Heart right ventricle (tissue), 16 donors: ENCODE measurements at regions of chr2 and their contacts with region 1.

Region 1: GRCh38 chr2:190459881-190460280 is 51.7 kb downstream of the MFSD6 start:
- DNase-seq: no peak
- ATAC-seq: peak in 7 of 8 donors; percentile 49 to 89 (median 75)
- H3K4me3 ChIP-seq: no peak overlapping the region
- H3K27ac ChIP-seq: peak overlapping the region in 1 of 10 donors; percentile 40
- H3K4me1 ChIP-seq: peaks cover 0 to 21% (median 14%) of the 10 kb centered on the region in 9 donors
- H3K27me3 ChIP-seq: no peaks in the 10 kb centered on the region
- CTCF ChIP-seq: no peak

Region 2: DNA sequence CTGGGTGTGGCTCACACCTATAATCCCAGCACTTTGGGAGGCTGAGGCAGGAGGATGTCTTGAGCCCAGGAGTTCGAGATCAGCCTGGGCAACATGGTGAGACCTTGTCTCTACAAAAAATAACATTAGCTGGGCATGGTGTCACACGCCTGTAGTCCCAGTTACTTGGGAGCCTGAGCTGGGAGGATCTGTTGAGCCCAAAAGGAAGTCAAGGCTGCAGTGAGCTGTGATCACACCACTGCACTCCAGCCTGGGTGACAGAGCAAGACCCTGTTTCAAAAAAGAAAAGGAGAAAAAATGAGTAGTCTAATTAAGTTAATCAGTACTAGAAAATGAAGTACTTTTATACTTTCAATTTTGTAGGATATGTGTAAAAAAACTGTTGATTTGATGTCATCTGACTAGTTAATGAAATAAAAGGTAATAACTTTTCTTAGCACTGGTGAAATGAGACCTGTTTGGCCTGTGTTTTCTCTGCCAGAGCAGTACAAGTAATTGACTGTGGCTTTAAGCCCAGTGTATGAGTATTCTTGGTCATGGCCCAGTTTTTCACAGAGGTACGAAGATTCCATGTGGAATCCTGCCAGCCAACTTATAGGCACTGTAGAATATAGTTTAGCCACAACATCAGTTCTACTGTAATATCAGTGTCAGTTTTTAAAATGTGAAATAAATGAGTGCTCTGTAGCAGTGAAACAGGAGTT is 16.0 kb before region 1 on chr2:
- intact Hi-C with region 1: loop called in 1 of 10 experiments (anchors 1 kb)
- DNase-seq: no peak
- ATAC-seq: no peak
- H3K4me3 ChIP-seq: no peak overlapping the region
- H3K27ac ChIP-seq: peak overlapping the region in 1 of 10 donors; percentile 20
- H3K4me1 ChIP-seq: peaks cover 5 to 85% (median 39%) of the 10 kb centered on the region in 9 donors
- H3K27me3 ChIP-seq: no peaks in the 10 kb centered on the region
- CTCF ChIP-seq: no peak

Region 3: GRCh38 chr2:190578158-190579057 is 118.5 kb after region 1 on chr2:
- intact Hi-C with region 1: no loop called
- DNase-seq: peak in 1 of 2 donors; percentile 73
- ATAC-seq: peak; percentile 44 to 88 (median 74)
- H3K4me3 ChIP-seq: no peak overlapping the region
- H3K27ac ChIP-seq: peak overlapping the region in 9 of 10 donors; percentile 7 to 76 (median 34)
- H3K4me1 ChIP-seq: peaks cover 6 to 60% (median 42%) of the 10 kb centered on the region in 9 donors
- H3K27me3 ChIP-seq: no peaks in the 10 kb centered on the region
- CTCF ChIP-seq: peak in 1 of 9 donors; percentile 22